CD8-positive, alpha-beta T cell (primary cell): ENCODE measurements at regions of chr2 and their contacts with region 1.

Region 1: DNA sequence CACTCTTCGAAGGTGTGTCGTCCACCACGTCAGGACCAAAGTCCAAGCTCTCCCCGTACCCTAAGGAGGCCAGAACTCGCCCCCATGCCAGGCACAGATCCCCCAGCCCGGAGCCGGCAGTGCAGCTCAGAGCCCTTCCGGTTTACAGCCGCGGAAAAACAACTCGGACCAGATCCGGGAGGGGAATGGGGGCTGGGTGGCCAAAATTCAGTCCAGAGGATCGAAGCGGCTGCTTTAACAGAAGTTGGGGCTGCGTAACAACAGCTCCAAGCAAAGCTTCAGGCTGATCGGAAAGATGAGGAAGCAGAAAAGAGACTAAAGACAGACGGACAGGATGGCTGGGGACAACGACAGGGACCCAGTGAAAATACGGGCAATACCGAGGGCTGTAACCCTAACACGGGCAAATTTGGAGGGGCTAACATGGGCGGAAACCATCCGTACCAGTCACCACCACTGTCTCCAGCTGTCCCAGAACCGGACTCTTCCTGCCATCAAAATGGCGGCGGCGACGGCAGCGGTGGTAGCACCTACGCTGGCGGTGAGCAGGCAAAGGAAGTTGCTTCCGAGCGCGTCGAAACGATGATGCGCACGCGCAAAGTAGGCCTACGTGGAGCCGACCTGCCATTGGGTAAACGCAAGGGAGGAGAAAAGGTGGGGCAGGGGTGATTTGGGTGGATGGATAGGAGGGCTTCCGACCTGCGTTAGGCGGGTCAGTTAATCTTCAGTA is at the start of gene MMADHC:
- DNase-seq: peak; percentile 86 to 97 (median 92)
- ATAC-seq: peak; percentile 96
- H3K4me3 ChIP-seq: peak within 1 kb of the TSS; percentile 79 to 86
- H3K4me3 Mint-ChIP-seq: peak within 1 kb of the TSS; percentile 94
- H3K27ac ChIP-seq: peak within 1 kb of the TSS; percentile 88 to 95
- H3K27ac Mint-ChIP-seq: peak within 1 kb of the TSS; percentile 98
- H3K4me1 ChIP-seq: peaks cover 34% of the 10 kb centered on the region
- H3K4me1 Mint-ChIP-seq: peaks cover 44% of the 10 kb centered on the region
- H3K27me3 ChIP-seq: no peaks in the 10 kb centered on the region
- H3K27me3 Mint-ChIP-seq: peaks cover 7% of the 10 kb centered on the region
- CTCF ChIP-seq: no peak
- total RNA-seq, gene MMADHC: 74.1 to 84.7 TPM

Region 2: GRCh38 chr2:148020111-148021058 is 1567.0 kb before region 1 on chr2 and contains the start of gene ORC4:
- CTCF ChIA-PET with region 1: no interaction called
- POLR2A ChIA-PET with region 1: no interaction called
- intact Hi-C with region 1: loop called (anchors 2 to 5 kb)
- DNase-seq: peak; percentile 91 to 100 (median 96)
- ATAC-seq: peak; percentile 86
- H3K4me3 ChIP-seq: peak within 1 kb of the TSS; percentile 96 to 97
- H3K4me3 Mint-ChIP-seq: peak within 1 kb of the TSS; percentile 100
- H3K27ac ChIP-seq: peak within 1 kb of the TSS; percentile 85 to 94
- H3K27ac Mint-ChIP-seq: peak within 1 kb of the TSS; percentile 98
- H3K4me1 ChIP-seq: peaks cover 47% of the 10 kb centered on the region
- H3K4me1 Mint-ChIP-seq: peaks cover 73% of the 10 kb centered on the region
- H3K27me3 ChIP-seq: no peaks in the 10 kb centered on the region
- H3K27me3 Mint-ChIP-seq: no peaks in the 10 kb centered on the region
- CTCF ChIP-seq: no peak
- total RNA-seq, gene ORC4: 28.5 to 29.9 TPM

Region 3: GRCh38 chr2:148644883-148645538 is 942.4 kb before region 1 on chr2:
- CTCF ChIA-PET with region 1: no interaction called
- POLR2A ChIA-PET with region 1: interaction called, 3 read pairs
- intact Hi-C with region 1: loop called in 1 of 2 experiments (anchors 5 kb)
- DNase-seq: peak; percentile 90 to 98 (median 94)
- ATAC-seq: peak; percentile 78
- H3K4me3 ChIP-seq: peak overlapping the region; percentile 85 to 87
- H3K4me3 Mint-ChIP-seq: peak overlapping the region; percentile 87
- H3K27ac ChIP-seq: peak overlapping the region; percentile 87 to 96
- H3K27ac Mint-ChIP-seq: peak overlapping the region; percentile 98
- H3K4me1 ChIP-seq: peaks cover 33% of the 10 kb centered on the region
- H3K4me1 Mint-ChIP-seq: peaks cover 36% of the 10 kb centered on the region
- H3K27me3 ChIP-seq: no peaks in the 10 kb centered on the region
- H3K27me3 Mint-ChIP-seq: no peaks in the 10 kb centered on the region
- CTCF ChIP-seq: no peak

Region 4: GRCh38 chr2:149573760-149574159 is 13.6 kb before region 1 on chr2:
- CTCF ChIA-PET with region 1: interaction called, 6 read pairs
- POLR2A ChIA-PET with region 1: interaction called, 10 read pairs
- intact Hi-C with region 1: no loop called
- DNase-seq: no peak
- ATAC-seq: no peak
- H3K4me3 ChIP-seq: no peak overlapping the region
- H3K4me3 Mint-ChIP-seq: no peak overlapping the region
- H3K27ac ChIP-seq: no peak overlapping the region
- H3K27ac Mint-ChIP-seq: no peak overlapping the region
- H3K4me1 ChIP-seq: no peaks in the 10 kb centered on the region
- H3K4me1 Mint-ChIP-seq: peaks cover 28% of the 10 kb centered on the region
- H3K27me3 ChIP-seq: no peaks in the 10 kb centered on the region
- H3K27me3 Mint-ChIP-seq: no peaks in the 10 kb centered on the region
- CTCF ChIP-seq: no peak

Region 5: GRCh38 chr2:151238527-151239487 is 1651.4 kb after region 1 on chr2:
- CTCF ChIA-PET with region 1: interaction called, 17 read pairs
- POLR2A ChIA-PET with region 1: no interaction called
- intact Hi-C with region 1: no loop called
- DNase-seq: peak in 6 of 9 experiments; percentile 5 to 68 (median 30)
- ATAC-seq: peak; percentile 78
- H3K4me3 ChIP-seq: no peak overlapping the region
- H3K4me3 Mint-ChIP-seq: no peak overlapping the region
- H3K27ac ChIP-seq: no peak overlapping the region
- H3K27ac Mint-ChIP-seq: no peak overlapping the region
- H3K4me1 ChIP-seq: no peaks in the 10 kb centered on the region
- H3K4me1 Mint-ChIP-seq: no peaks in the 10 kb centered on the region
- H3K27me3 ChIP-seq: no peaks in the 10 kb centered on the region
- H3K27me3 Mint-ChIP-seq: peaks cover 2% of the 10 kb centered on the region
- CTCF ChIP-seq: peak; percentile 88

Region 6: DNA sequence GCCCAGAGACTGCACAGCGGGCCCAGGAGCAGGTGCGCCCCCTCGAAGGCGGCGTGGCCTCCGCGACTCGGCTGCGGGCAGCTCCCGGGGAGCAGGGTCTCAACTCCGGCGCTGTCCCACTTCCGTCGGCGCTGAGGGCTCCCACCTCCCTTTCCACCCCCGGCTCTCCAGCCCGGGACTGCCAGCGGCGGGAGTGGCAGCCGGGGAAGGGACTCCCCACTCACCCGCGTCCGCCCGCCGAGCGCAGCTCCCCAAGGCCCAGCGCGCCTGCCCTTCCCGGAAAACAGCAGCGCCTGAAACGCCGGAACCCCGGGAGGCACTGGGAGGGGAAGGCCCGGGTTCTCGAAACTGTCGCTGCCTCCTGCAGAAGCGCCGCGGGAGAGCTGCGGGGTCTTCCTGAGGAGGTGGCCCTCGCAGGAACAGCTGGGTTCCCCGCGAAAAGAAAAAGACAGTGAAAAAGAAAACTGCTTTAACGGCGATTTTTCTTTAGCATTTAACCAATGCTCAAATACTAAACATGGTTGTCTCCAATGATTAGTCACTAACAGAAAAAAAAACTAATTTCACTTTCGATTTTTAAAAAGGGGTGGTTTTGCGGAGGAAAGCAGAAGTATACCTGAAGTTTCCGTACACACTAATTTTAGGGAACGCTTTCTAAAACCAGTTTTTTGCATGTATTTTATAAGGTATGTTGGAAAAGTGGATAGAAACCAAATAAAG is 1702.1 kb after region 1 on chr2 and contains the start of gene NMI:
- CTCF ChIA-PET with region 1: no interaction called
- POLR2A ChIA-PET with region 1: interaction called, 5 read pairs
- intact Hi-C with region 1: loop called (anchors 1 to 5 kb)
- DNase-seq: peak; percentile 30 to 82 (median 64)
- ATAC-seq: peak; percentile 68
- H3K4me3 ChIP-seq: peak within 1 kb of the TSS; percentile 89 to 92
- H3K4me3 Mint-ChIP-seq: peak within 1 kb of the TSS; percentile 95
- H3K27ac ChIP-seq: peak within 1 kb of the TSS; percentile 92 to 97
- H3K27ac Mint-ChIP-seq: peak within 1 kb of the TSS; percentile 99
- H3K4me1 ChIP-seq: peaks cover 31% of the 10 kb centered on the region
- H3K4me1 Mint-ChIP-seq: peaks cover 46% of the 10 kb centered on the region
- H3K27me3 ChIP-seq: no peaks in the 10 kb centered on the region
- H3K27me3 Mint-ChIP-seq: no peaks in the 10 kb centered on the region
- CTCF ChIP-seq: no peak
- total RNA-seq, gene NMI: 16.9 to 18.0 TPM